Naive thymus-derived CD4-positive, alpha-beta T cell (primary cell): ENCODE measurements at regions of chr11 and their contacts with region 1.

Region 1: DNA sequence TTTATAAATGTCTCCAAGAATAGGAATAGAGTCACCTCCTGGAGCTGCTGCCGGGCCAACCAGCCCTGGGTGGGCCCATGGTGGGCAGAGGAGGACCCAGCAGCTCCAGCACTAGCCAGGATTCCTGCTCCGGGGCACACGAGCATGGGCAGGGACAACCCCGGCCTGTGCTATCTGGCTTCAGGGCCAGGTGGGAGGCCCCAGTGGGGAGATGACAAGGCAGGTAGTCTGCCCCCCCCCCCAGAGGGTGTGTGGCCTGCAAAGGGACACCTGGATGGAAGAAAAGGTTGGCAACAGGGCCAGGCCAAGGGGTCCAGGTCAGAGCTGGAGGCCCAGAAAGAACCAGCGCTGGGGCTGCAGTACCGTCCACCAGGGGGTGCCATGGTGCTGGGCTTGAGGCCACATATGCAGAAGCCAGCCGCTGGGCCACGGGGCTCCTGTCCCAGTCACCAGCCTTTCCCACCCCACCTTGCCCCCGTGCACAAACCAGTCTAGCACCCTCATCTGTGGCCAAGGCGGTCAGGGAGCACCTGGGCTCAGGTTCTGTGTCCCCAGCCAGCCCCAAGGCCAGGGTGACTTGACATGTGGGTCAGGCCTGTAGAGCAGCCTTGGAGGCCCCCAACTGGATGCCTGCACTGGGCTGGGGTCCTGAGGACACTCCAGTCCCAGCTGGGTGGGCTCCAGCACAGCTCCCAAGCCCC is 3.5 kb downstream of the TSPAN32 start:
- DNase-seq: peak; percentile 62 to 84 (median 76)
- ATAC-seq: peak; percentile 65
- H3K4me3 ChIP-seq: peak overlapping the region; percentile 38
- H3K4me3 Mint-ChIP-seq: peak overlapping the region; percentile 77 to 98 (median 92)
- H3K27ac ChIP-seq: peak overlapping the region; percentile 81
- H3K27ac Mint-ChIP-seq: peak overlapping the region; percentile 86 to 96 (median 90)
- H3K4me1 ChIP-seq: peaks cover 40 to 55% of the 10 kb centered on the region in 2 donors
- H3K4me1 Mint-ChIP-seq: peaks cover 12 to 54% (median 36%) of the 10 kb centered on the region in 7 donors
- H3K27me3 ChIP-seq: no peaks in the 10 kb centered on the region
- H3K27me3 Mint-ChIP-seq: no peaks in the 10 kb centered on the region

Region 2: DNA sequence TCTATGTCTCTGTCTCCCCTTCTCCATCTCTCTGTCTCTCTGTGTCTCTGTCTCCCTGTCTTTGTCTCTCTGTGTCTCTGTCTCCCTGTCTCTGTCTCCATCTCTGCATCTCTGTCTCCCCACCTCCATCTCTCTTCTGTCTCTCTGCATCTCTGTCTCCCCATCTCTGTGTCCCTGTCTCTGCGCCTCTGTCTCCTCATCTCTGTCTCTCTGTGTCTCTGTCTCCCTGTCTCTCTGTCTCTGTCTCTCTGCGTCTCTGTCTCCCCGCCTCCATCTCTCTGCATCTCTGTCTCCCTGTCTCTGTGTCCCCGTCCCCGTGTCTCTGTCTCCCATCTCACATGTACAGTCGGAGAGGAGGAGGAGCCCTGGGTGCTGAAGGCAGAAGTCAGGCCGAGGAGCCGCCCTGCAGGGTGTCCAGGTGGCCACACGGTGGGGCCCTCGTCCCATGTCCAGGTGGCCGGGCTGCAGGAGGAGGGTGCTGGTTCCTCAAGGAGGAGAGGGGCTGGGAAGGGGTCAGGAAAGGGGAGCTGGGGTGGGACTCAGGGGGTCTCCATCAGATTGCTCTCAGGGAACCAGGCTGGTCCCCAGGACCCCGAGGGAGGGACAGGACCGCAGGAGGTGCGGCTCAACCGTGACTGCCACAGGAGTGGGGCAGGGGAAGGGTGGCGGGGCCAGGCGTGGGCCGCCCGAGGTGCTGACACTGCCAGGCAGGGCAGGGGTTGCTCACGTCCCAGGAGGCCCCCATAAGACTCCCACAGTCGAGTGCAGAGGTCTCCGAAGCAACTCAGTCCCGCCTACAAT is 108.1 kb before region 1 on chr11:
- CTCF ChIA-PET with region 1: interaction called, 5 read pairs
- POLR2A ChIA-PET with region 1: interaction called, 3 read pairs
- intact Hi-C with region 1: loop called (anchors 1 kb)
- DNase-seq: peak; percentile 29 to 72 (median 62)
- ATAC-seq: peak; percentile 89
- H3K4me3 ChIP-seq: no peak overlapping the region
- H3K4me3 Mint-ChIP-seq: no peak overlapping the region
- H3K27ac ChIP-seq: no peak overlapping the region
- H3K27ac Mint-ChIP-seq: peak overlapping the region in 2 of 9 donors; percentile 46 to 69
- H3K4me1 ChIP-seq: peaks cover 0 to 4% of the 10 kb centered on the region in 2 donors
- H3K4me1 Mint-ChIP-seq: peaks cover 4 to 16% (median 12%) of the 10 kb centered on the region in 7 donors
- H3K27me3 ChIP-seq: no peaks in the 10 kb centered on the region
- H3K27me3 Mint-ChIP-seq: peaks cover 4 to 13% (median 12%) of the 10 kb centered on the region in 5 donors

Region 3: DNA sequence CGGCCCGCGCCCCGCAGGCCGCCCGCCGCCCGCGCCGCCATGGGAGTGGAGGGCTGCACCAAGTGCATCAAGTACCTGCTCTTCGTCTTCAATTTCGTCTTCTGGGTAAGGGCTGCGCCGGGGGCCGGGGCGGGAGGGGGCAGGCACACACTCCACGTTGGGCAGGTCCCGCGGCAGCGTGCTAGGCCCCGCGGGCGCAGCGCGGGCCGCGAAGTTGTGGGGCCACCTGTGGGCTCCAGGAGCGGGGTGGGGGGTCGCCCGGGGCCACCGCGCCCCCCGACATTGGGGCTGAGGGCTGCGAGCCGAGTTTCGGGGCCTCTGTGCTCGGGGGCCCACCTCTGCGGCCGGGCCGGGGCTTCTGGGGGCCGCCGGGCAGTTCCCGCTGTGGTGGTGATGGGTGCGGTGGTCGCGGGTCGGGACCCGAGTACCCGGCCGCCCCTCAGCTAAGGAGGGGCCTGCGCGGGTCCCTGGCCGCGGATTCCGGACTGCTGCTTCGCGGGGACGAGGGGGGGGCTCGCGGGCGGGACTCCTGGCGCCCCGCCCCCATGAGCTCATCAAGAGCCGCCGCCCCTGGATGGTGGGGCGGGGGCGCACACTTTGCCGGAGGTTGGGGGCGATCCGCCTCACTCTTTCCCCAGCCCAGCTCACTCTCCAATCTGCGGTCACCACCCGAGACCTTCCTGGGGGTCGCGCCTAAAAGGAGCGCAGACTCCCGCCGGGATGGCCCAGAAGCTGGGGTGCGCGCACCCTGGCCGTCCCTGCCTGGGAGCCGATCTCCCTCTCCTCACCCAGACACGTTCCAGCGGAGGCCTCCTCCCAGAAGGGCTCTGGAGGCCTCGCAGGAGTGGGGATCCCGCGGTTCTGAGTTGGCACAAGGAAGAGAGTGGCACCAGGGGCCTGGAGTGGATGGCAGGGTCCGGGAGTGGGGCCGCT is 72.5 kb after region 1 on chr11:
- CTCF ChIA-PET with region 1: interaction called, 3 read pairs
- POLR2A ChIA-PET with region 1: interaction called, 5 read pairs
- intact Hi-C with region 1: loop called (anchors 1 to 5 kb)
- DNase-seq: peak in 8 of 9 donors; percentile 34 to 73 (median 52)
- ATAC-seq: peak; percentile 54
- H3K4me3 ChIP-seq: peak overlapping the region; percentile 83
- H3K4me3 Mint-ChIP-seq: peak overlapping the region; percentile 71 to 89 (median 84)
- H3K27ac ChIP-seq: peak overlapping the region; percentile 89
- H3K27ac Mint-ChIP-seq: peak overlapping the region in 7 of 9 donors; percentile 57 to 89 (median 81)
- H3K4me1 ChIP-seq: peaks cover 19 to 21% of the 10 kb centered on the region in 2 donors
- H3K4me1 Mint-ChIP-seq: peaks cover 13 to 44% (median 20%) of the 10 kb centered on the region in 7 donors
- H3K27me3 ChIP-seq: no peaks in the 10 kb centered on the region
- H3K27me3 Mint-ChIP-seq: peaks cover 0 to 7% (median 0%) of the 10 kb centered on the region in 5 donors